ENCODE measurements at regions of chr6 and their contacts with region 1.

Region 1: DNA sequence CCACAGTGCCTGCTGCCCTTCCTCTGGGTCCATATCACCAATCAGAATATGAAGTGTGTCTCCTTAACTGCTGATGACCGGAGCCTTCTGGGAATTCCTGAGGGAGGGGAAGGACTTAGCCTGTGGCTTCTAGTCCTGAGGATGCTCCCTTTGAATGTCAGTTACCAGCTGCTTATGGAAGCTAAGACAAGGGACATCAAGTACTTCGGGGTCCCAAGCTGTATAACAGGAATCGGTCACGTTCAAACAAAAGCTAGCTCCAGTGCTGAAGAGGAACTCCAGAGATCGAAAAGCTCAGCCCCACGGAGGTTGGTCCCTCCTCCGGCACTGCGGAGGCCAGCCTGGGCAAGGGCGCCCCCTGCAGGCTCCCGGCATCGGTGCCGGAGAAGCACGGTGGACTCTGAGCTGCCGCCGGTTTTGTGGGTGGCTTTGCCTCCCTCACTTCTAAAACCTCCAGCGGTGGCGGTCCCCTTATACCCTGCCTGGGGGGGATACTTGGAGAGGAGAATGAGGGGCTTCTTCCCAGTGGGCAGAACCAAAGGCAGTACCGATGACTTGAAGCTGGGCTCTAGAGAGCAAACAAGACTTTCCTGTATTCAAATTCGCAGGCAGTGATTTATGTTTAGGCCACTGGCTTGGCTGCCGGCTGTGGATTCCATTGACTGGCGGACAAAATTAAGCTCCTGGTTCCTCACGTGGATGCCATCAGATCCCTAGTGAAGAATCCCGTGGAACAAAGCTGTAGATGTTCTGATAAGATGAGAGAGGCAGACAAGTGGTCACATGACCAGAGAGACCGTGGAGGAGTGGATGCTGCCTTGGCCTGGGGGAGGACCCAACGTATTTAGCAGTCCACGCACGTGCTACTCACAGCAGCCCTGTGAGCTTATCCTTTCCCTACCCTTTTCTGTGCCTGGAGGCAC is 16.2 kb upstream of the UBR2 start:
- DNase-seq: peak; percentile 90
- ATAC-seq: peak; percentile 99
- H3K4me3 Mint-ChIP-seq: peak overlapping the region; percentile 81
- H3K27ac Mint-ChIP-seq: peak overlapping the region; percentile 83
- H3K4me1 Mint-ChIP-seq: peaks cover 12% of the 10 kb centered on the region
- H3K27me3 Mint-ChIP-seq: no peaks in the 10 kb centered on the region
- CTCF ChIP-seq: peak; percentile 90

Region 2: DNA sequence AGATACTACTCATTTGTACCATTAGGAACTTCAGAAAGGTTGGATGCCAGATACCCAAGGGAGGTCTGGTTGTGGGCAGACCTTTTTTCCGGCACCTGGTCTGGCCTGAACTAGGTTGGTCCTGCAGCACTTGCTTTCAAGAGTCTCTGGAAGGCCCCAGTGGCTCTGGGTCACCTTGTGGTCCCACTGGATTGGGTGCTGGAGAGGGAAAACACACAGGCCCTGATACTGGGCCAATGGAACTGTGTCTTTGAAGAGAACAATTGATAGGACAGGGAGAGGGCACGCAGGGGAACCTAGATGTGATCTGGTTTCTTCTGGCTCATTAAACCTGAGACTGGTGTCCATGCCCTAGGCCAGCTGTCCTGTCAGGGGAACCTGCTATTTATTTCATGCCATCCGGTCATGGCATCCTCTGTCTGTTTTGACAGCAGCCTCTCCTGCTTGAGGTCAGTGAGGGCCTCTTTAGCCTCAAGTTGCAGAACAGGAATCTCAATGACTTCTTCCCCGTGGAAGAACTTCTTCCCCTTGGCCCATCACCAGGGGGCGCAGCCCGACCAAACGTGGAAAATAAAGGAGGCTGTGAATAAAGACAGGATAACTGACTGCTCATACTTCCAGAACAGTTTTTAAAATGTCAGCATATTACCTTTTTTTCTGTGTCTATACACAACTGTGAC is 472.4 kb before region 1 on chr6:
- CTCF ChIA-PET with region 1: interaction called, 8 read pairs
- POLR2A ChIA-PET with region 1: no interaction called
- intact Hi-C with region 1: loop called (anchors 1 kb)
- DNase-seq: peak; percentile 46
- ATAC-seq: no peak
- H3K4me3 Mint-ChIP-seq: no peak overlapping the region
- H3K27ac Mint-ChIP-seq: no peak overlapping the region
- H3K4me1 Mint-ChIP-seq: no peaks in the 10 kb centered on the region
- H3K27me3 Mint-ChIP-seq: no peaks in the 10 kb centered on the region
- CTCF ChIP-seq: no peak

Region 3: GRCh38 chr6:42294759-42295158 is 252.9 kb before region 1 on chr6:
- CTCF ChIA-PET with region 1: no interaction called
- POLR2A ChIA-PET with region 1: no interaction called
- intact Hi-C with region 1: no loop called
- DNase-seq: no peak
- ATAC-seq: no peak
- H3K4me3 Mint-ChIP-seq: no peak overlapping the region
- H3K27ac Mint-ChIP-seq: no peak overlapping the region
- H3K4me1 Mint-ChIP-seq: peaks cover 6% of the 10 kb centered on the region
- H3K27me3 Mint-ChIP-seq: no peaks in the 10 kb centered on the region
- CTCF ChIP-seq: no peak

Region 4: DNA sequence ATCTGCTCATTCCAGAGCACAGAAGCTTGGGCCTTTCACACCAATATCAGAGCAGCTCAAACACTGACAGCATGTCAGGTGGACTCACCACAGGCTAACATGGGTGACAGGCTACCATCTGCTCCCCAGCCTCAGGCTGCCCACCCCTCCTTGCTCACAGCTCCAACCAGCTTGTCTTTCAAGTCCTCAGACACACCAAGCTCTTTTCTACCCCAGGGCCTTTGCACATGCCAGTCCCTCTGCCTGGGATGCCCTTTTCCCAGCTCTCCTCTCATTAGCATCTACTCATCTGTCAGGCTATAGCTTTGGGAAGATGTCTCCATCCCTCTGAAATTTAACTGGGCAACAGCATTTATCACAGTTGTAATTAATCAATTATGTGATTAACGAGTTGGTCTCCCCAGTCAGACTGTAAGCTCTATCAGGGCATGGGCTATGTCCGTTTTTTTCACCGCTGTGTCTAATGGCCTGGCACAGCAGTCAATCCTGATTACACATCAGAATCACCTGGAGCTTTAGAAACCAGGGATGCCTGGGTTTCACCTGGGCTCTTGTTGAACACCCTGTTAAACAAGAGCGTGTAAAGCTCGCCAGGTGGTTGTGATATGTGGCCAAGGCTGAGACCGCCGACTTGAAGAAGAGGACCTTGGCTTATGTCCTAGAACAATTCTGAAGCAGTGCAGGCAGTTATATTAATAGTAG is 241.1 kb before region 1 on chr6:
- CTCF ChIA-PET with region 1: interaction called, 29 read pairs
- POLR2A ChIA-PET with region 1: no interaction called
- intact Hi-C with region 1: loop called (anchors 1 kb)
- DNase-seq: no peak
- ATAC-seq: no peak
- H3K4me3 Mint-ChIP-seq: no peak overlapping the region
- H3K27ac Mint-ChIP-seq: no peak overlapping the region
- H3K4me1 Mint-ChIP-seq: no peaks in the 10 kb centered on the region
- H3K27me3 Mint-ChIP-seq: no peaks in the 10 kb centered on the region
- CTCF ChIP-seq: no peak

Region 5: DNA sequence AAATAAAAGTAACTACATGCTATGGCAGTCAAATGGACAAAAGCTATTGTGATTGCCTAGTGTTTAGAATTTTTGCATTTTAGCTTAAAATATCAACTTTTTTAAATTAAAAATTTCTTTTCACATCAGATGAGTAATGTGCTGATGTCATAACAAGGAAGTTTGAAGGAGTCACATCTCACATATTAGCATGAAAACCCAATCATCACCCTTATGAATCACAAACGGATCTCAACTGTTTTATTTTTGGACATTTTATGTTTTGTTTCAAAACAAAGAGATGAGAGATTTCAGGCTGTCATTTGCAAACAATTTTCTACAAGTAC is 42.3 kb before region 1 on chr6:
- CTCF ChIA-PET with region 1: interaction called, 44 read pairs
- POLR2A ChIA-PET with region 1: no interaction called
- intact Hi-C with region 1: no loop called
- DNase-seq: no peak
- ATAC-seq: peak; percentile 41
- H3K4me3 Mint-ChIP-seq: no peak overlapping the region
- H3K27ac Mint-ChIP-seq: peak overlapping the region; percentile 35
- H3K4me1 Mint-ChIP-seq: peaks cover 29% of the 10 kb centered on the region
- H3K27me3 Mint-ChIP-seq: no peaks in the 10 kb centered on the region
- CTCF ChIP-seq: no peak

Region 6: GRCh38 chr6:42537536-42537935 is 10.1 kb before region 1 on chr6:
- CTCF ChIA-PET with region 1: interaction called, 24 read pairs
- POLR2A ChIA-PET with region 1: interaction called, 3 read pairs
- intact Hi-C with region 1: no loop called
- DNase-seq: no peak
- ATAC-seq: no peak
- H3K4me3 Mint-ChIP-seq: no peak overlapping the region
- H3K27ac Mint-ChIP-seq: no peak overlapping the region
- H3K4me1 Mint-ChIP-seq: no peaks in the 10 kb centered on the region
- H3K27me3 Mint-ChIP-seq: no peaks in the 10 kb centered on the region
- CTCF ChIP-seq: no peak